WTC11 (cell line): ENCODE measurements at regions of chr22 and their contacts with region 1.

Region 1: DNA sequence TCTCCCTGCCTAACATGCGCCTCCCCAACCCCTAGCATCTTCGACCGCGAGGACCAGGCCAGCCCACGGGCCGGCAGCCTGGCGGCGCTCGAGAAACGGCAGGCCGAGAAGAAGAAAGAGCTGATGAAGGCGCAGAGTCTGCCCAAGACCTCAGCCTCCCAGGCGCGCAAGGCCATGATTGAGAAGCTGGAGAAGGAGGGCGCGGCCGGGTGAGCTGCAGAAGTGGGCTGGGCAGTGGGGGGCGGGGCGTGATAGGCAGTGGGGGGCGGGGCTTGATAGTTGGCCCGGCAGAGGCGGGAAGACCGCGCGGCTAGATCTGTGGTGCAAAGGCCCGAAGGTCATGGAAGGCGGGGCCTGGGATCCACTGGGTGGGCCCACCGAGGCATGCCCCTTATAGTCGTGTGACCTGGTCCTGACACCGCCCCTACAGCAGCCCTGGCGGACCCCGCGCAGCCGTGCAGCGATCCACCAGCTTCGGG is 8.7 kb downstream of the SELENOM start:
- DNase-seq: peak; percentile 80
- ATAC-seq: peak; percentile 90
- H3K4me3 Mint-ChIP-seq: peak overlapping the region; percentile 65
- H3K27ac Mint-ChIP-seq: no peak overlapping the region
- H3K4me1 Mint-ChIP-seq: peaks cover 17% of the 10 kb centered on the region
- H3K27me3 Mint-ChIP-seq: peaks cover 5% of the 10 kb centered on the region; the same call in 1 of the 2 replicates
- CTCF ChIP-seq: no peak

Region 2: DNA sequence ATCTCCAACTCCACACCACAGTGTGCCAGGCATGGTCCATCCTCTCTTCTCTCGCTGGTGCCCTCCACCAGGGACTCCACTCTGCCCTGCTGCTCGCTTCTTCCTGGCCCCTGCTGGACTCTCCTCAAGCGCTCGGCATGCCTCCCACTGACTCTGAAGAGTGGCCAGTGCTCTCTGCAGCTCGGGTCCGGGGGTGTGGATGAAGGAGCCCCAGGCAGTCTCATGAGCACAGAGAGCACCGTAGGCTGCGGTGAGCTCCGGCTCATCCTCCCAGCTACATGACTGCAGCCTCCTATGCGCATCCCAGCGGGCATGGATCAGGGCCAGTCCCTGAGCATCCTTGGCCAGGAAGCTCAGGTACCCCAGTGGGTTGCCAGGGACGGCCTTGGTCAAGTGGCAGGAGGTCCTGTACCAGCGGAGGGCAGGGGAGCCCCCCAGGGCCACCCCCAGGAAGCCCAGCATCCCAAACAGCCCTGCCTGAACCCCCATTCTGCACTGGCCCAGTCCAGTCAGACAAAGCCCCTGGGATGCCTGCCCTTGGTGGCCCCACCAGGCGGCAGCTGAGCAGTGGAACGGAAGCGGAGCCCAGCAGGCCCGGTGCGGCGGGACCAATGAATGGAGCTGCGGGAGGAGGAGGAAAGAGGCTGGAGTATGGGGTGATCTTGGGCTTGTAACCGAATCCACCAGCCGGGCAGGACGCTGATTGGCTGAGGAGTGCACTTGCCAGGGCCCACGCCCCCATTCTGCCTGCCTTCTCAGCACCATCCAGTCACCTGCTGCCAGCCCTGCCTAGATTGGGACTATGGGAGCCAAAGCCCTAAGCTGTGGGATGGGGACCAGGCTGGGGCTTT is 41.4 kb after region 1 on chr22 and contains the start of gene PLA2G3:
- CTCF ChIA-PET with region 1: interaction called, 15 read pairs
- POLR2A ChIA-PET with region 1: interaction called, 5 read pairs
- DNase-seq: peak; percentile 94
- ATAC-seq: peak; percentile 98
- H3K4me3 Mint-ChIP-seq: peak within 1 kb of the TSS; percentile 86
- H3K27ac Mint-ChIP-seq: peak within 1 kb of the TSS; percentile 82
- H3K4me1 Mint-ChIP-seq: peaks cover 22% of the 10 kb centered on the region
- H3K27me3 Mint-ChIP-seq: peaks cover 9% of the 10 kb centered on the region
- CTCF ChIP-seq: no peak
- total RNA-seq, gene PLA2G3: 14.7 to 18.3 TPM (median 15.1 TPM) in 3 replicates

Region 3: GRCh38 chr22:31148953-31149627 is 50.4 kb after region 1 on chr22:
- CTCF ChIA-PET with region 1: interaction called, 13 read pairs
- POLR2A ChIA-PET with region 1: no interaction called
- DNase-seq: peak; percentile 84
- ATAC-seq: peak; percentile 99
- H3K4me3 Mint-ChIP-seq: no peak overlapping the region
- H3K27ac Mint-ChIP-seq: no peak overlapping the region
- H3K4me1 Mint-ChIP-seq: no peaks in the 10 kb centered on the region
- H3K27me3 Mint-ChIP-seq: peaks cover 31% of the 10 kb centered on the region
- CTCF ChIP-seq: peak; percentile 79